ENCODE measurements at regions of chrX and their contacts with region 1.

Region 1: DNA sequence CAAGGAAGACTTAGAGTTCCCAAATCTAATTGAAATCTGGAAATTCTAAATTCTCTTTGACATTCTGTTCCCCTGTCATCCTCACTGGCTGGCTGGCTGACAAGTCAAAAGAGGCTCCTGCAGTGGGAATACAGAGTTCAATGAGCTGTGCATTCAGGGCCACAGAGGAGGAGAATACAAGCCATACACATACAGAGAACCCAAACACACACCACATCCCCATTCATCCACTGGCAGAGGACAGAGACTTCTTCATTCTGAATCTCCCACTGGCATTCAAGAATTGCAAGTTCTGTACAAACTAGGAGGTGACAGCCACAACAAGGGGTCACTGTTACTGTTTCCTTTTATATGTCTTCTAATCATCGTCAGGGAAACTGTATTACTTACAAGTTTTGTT is 49.7 kb downstream of the SAT1 start:
- H3K4me3 Mint-ChIP-seq: no peak overlapping the region
- H3K27ac Mint-ChIP-seq: peak overlapping the region; percentile 55
- H3K4me1 Mint-ChIP-seq: peaks cover 14% of the 10 kb centered on the region
- H3K27me3 Mint-ChIP-seq: no peaks in the 10 kb centered on the region

Region 2: GRCh38 chrX:23854945-23855344 is 22.2 kb after region 1 on chrX:
- intact Hi-C with region 1: loop called (anchors 1 kb)
- H3K4me3 Mint-ChIP-seq: no peak overlapping the region
- H3K27ac Mint-ChIP-seq: no peak overlapping the region
- H3K4me1 Mint-ChIP-seq: peaks cover 5% of the 10 kb centered on the region
- H3K27me3 Mint-ChIP-seq: no peaks in the 10 kb centered on the region

Measured in dendritic cell treated with granulocyte-macrophage colony-stimulating factor and Interleukin-4, amounts not matched to agents 40 ng/mL and 50 ng/mL, for 4 days (primary cell).